ENCODE measurements at regions of chr10 and their contacts with region 1.

Region 1: GRCh38 chr10:77195101-77195500 is 442.5 kb downstream of the KCNMA1 start:
- DNase-seq: peak; percentile 100
- ATAC-seq: peak; percentile 99
- H3K4me3 ChIP-seq: 0 out of 2 replicates have a peak overlapping the region, but pooled peaks have one; percentile 0
- H3K27ac ChIP-seq: peak overlapping the region; percentile 41
- H3K4me1 ChIP-seq: peaks cover 46% of the 10 kb centered on the region
- H3K27me3 ChIP-seq: no peaks in the 10 kb centered on the region
- CTCF ChIP-seq: no peak

Region 2: GRCh38 chr10:77036993-77037734 is 157.9 kb before region 1 on chr10:
- CTCF ChIA-PET with region 1: no interaction called
- POLR2A ChIA-PET with region 1: interaction called, 12 read pairs
- intact Hi-C with region 1: no loop called
- DNase-seq: peak; percentile 74
- ATAC-seq: 0 out of 2 replicates have a peak, but pooled peaks have one; percentile 8
- H3K4me3 ChIP-seq: no peak overlapping the region
- H3K27ac ChIP-seq: no peak overlapping the region
- H3K4me1 ChIP-seq: peaks cover 7% of the 10 kb centered on the region
- H3K27me3 ChIP-seq: no peaks in the 10 kb centered on the region
- CTCF ChIP-seq: peak; percentile 100

Region 3: DNA sequence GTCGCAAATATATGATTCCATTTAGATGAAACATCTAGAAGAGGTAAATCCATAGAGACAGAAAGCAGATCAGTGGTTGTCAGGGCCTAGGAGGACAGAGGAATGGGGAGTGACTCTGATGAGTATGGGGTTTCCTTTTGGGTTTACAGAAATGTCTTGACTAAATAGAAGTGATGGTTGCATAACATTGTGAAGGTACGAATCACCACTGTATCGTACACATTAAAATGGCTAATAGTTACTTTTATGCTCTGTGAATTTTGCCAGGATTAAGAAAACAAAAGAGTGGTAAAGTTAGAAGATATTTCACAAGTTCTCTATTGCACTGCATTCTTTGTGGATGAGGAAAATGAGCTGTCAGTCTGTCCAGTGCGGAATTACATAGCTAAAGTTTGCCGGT is 35.1 kb after region 1 on chr10:
- CTCF ChIA-PET with region 1: no interaction called
- POLR2A ChIA-PET with region 1: interaction called, 14 read pairs
- intact Hi-C with region 1: loop called (anchors 1 kb)
- DNase-seq: peak; percentile 93
- ATAC-seq: peak; percentile 95
- H3K4me3 ChIP-seq: no peak overlapping the region
- H3K27ac ChIP-seq: peak overlapping the region; percentile 57
- H3K4me1 ChIP-seq: peaks cover 40% of the 10 kb centered on the region
- H3K27me3 ChIP-seq: no peaks in the 10 kb centered on the region
- CTCF ChIP-seq: no peak

Region 4: DNA sequence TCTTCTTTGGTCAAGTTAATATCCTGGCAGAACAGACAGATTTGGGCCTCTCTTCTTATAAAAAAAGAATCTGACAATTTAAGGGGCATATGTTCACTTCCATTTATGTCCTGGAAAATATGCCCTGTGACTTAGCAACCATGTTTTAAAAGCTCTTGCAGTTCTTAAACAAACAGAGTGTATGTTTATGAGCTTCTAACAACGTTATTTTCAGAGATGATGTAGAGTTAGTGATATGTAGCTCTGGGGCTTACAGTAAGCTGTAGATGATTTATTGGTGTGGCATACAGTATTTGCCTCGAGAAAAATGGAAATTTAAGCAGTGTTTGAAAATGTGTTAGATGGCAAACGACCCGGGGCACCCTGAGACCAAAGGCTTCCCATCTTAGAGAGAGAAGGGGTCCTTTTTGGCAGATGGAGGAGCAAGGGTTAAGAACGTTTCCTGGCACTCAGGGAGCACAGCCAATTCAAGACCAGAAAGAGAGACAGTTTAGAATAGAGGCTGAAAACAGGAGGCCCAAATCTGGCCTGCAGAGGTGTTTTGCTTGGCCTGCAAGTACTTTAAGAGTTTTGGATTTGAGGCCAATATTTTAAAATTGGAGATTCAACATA is 45.0 kb after region 1 on chr10:
- CTCF ChIA-PET with region 1: interaction called, 3 read pairs
- POLR2A ChIA-PET with region 1: interaction called, 5 read pairs
- intact Hi-C with region 1: loop called (anchors 1 kb)
- DNase-seq: peak; percentile 88
- ATAC-seq: peak; percentile 80
- H3K4me3 ChIP-seq: no peak overlapping the region
- H3K27ac ChIP-seq: peak overlapping the region; percentile 58
- H3K4me1 ChIP-seq: peaks cover 52% of the 10 kb centered on the region
- H3K27me3 ChIP-seq: no peaks in the 10 kb centered on the region
- CTCF ChIP-seq: no peak

Region 5: GRCh38 chr10:77301305-77301730 is 106.2 kb after region 1 on chr10:
- CTCF ChIA-PET with region 1: no interaction called
- POLR2A ChIA-PET with region 1: interaction called, 4 read pairs
- intact Hi-C with region 1: loop called (anchors 2 kb)
- DNase-seq: peak; percentile 96
- ATAC-seq: 0 out of 2 replicates have a peak, but pooled peaks have one; percentile 1
- H3K4me3 ChIP-seq: no peak overlapping the region
- H3K27ac ChIP-seq: no peak overlapping the region
- H3K4me1 ChIP-seq: peaks cover 34% of the 10 kb centered on the region
- H3K27me3 ChIP-seq: no peaks in the 10 kb centered on the region
- CTCF ChIP-seq: no peak

Region 6: DNA sequence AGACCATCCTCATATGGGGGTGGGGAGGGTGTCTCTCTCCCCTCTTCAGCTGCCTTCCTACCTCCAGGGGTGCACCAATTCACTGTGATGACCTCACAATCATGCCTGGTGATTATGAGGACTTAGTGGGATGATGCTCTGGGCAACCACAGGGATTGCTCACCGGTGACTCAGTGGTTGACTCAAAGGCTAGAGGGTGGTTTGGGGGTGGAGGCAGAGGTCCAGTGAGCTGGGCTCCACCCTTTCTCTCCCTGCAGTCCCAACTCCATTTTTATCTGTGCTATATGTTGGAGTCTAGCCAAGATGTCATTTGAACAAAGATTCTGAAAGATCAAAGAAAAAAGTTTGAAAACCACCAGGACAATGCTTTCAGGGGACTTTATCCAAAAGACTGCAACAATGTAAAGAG is 155.6 kb after region 1 on chr10:
- CTCF ChIA-PET with region 1: no interaction called
- POLR2A ChIA-PET with region 1: no interaction called
- intact Hi-C with region 1: loop called (anchors 1 kb)
- DNase-seq: peak; percentile 100
- ATAC-seq: peak; percentile 96
- H3K4me3 ChIP-seq: 0 out of 2 replicates have a peak overlapping the region, but pooled peaks have one; percentile 0
- H3K27ac ChIP-seq: peak overlapping the region; percentile 77
- H3K4me1 ChIP-seq: peaks cover 52% of the 10 kb centered on the region
- H3K27me3 ChIP-seq: no peaks in the 10 kb centered on the region
- CTCF ChIP-seq: 0 out of 2 replicates have a peak, but pooled peaks have one; percentile 18

Measured in PC-3 (cell line).